ENCODE measurements at regions of chr6 and their contacts with region 1.

Region 1: DNA sequence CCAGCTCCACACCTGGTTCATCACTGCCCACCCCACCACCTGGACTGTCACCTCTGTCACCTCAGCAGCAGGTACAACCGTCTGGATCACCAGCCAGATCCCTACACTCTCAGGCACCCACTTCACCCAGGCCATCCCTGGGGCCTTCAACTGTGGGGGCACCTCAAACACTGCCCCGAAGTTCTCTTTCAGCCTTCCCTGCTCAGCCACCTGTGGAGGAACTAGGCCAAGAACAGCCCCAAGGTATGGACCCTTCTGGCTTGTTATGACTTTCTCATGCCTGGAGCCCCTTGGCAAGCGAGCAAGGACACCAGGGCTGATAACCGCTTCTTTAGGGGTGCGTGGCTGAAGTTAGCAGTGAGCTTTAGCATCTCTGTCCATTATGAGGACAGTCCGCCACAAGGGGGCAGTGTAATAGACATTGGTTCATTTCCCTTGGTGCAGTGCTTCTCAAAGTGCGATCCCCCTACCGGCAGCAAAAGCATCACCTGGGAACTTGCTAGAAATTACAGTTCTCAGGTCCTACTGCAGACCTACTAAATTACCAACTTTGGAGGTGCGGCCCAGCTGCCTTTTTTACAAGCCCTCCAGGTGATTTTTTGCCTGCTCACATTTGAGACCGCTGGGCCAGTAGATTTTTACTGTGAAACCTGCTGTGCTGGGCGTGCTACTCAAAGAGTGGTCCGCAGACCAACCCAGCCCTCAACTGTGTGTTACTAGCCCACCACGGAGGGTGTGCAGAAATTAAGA is 32.5 kb downstream of the PNPLA1 start:
- DNase-seq: peak; percentile 80
- ATAC-seq: peak; percentile 90

Region 2: DNA sequence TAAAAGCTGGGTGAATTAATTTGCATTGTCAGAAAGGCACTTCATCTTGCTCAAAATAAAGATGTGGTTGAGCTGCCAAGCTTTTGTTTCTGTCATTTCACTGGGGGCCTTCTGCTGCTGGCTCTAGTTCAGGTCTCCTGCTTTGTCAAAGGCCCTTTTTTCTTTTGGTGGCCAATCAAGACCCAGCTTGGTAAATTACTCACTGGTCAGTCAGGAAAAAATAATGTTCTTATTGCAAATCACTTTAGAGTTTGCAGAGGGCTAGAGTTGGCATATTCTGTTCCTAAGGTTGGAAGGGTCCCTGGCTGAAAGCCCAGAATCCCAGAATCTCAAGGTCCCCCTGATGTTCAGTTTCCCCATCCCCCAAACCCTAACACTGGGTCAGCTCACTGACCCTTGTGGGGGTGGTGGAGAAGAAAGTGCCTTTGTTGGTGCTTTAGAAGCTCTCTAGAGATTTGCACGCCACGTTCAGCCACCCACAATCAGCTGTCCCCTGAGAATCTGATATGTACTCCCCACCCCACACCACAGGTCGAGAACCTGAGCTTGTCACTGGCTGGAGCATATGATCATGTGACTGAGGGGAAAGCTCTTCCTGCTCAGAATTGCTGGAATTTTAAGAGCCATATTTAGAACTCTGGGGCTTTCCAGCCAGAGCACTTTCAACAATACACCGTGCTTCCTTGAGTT is 56.0 kb after region 1 on chr6:
- intact Hi-C with region 1: loop called (anchors 5 kb)
- DNase-seq: no peak
- ATAC-seq: peak; percentile 22

Region 3: DNA sequence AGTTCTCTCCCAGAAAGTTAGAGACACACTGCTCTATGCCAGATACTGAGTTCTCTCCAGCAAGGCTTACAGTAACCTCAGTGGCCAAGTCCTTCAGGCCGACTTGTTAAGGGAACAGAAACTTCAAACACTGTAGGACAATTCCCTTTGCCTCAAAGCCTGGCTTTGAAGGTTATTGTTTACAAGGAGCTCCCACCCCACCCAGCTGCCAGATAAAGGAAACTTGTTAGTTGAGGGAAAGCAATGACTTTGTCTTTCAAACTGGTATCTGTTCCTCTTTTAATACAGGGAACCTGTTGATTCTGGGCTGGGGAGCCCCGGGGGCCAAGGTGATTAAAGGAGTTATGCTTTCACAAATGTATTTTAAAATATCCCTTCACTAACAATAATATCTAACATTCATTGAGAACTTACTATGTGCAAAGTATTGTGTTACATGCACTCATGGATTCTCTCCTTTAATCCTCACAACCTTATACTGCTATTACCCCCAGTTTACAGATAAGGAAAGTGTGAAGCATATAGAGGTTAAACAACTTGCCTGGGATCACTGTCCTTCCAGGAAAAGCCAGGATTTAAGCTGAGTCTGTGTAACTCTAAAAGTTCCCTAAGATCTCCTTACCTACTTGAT is 348.6 kb after region 1 on chr6:
- intact Hi-C with region 1: no loop called
- DNase-seq: no peak
- ATAC-seq: peak; percentile 46